AG04450 (cell line): ENCODE measurements at regions of chr7 and their contacts with region 1.

Region 1: DNA sequence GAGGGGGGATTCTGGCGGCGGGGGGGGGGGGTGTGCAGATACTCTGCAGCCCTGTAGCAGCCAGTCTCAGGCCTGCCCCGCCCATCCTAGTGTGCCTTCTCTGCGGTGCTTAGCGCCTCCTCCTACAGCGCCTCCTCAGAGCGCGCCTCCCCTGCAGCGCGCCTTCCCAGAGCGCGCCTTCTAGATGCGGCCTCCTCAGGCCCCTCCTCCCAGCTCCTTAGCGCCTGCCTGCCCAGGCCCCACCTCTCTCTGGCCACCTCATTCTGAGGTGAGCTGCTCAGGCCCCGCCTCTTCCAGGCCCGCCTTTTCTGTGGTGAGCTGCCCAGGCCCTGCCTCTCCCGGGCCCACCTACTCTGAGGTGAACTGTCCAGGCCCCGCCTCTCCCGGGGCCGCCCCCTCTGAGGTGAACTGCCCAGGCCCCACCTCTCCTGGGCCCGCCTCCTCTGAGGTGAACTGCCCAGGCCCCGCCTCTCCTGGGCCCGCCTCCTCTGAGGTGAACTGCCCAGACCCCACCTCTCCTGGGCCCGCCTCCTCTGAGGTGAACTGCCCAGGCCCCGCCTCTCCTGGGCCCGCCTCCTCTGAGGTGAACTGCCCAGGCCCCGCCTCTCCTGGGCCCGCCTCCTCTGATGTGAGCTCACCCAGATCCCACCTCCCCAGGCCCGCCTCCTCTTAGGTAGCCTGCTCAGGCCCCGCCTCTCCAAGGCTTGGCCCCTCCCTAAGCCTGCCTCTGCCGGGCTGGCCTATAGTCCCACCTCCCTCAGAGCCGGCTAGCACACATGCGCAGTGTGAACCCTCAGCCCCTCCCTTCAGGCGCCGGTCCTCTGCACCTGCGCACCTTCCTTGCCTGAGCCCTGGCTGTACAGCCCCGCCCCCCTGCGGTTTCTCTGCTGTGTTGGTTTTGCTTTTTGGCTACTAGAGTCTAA is 2.1 kb upstream of the SGCE start:
- DNase-seq: peak; percentile 73
- H3K4me3 ChIP-seq: peak overlapping the region; percentile 62
- H3K27ac ChIP-seq: no peak overlapping the region
- H3K27me3 ChIP-seq: no peaks in the 10 kb centered on the region
- CTCF ChIP-seq: no peak

Region 2: GRCh38 chr7:94642838-94643653 is 15.0 kb before region 1 on chr7:
- CTCF ChIA-PET with region 1: interaction called, 13 read pairs
- POLR2A ChIA-PET with region 1: no interaction called
- DNase-seq: no peak
- H3K4me3 ChIP-seq: no peak overlapping the region
- H3K27ac ChIP-seq: no peak overlapping the region
- H3K27me3 ChIP-seq: no peaks in the 10 kb centered on the region
- CTCF ChIP-seq: no peak

Region 3: DNA sequence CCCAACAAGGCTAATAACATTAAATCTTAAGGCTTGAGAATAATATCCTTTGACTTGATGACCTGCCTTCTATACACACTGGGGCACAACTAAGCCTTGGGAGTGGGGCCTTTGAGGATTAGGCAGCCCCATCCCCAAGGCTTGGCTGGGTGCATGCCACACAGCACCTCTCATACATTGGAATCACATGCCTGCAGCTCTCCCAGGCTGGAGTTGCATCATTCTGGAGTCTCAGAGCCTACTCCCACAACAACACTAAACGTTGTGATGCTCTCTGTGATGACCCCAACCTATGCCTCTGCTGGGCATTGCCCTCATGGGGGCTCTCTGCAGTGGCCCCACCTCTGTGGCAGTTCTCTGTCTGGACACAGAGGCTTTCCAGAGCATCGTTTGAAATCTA is 29.8 kb after region 1 on chr7:
- CTCF ChIA-PET with region 1: no interaction called
- POLR2A ChIA-PET with region 1: no interaction called
- DNase-seq: no peak
- H3K4me3 ChIP-seq: no peak overlapping the region
- H3K27ac ChIP-seq: no peak overlapping the region
- H3K27me3 ChIP-seq: no peaks in the 10 kb centered on the region
- CTCF ChIP-seq: no peak